ENCODE measurements at regions of chr4 and their contacts with region 1.

Region 1: GRCh38 chr4:71287305-71287704 is 51.5 kb upstream of the SLC4A4 start:
- DNase-seq: peak; percentile 89
- ATAC-seq: peak; percentile 81
- H3K4me3 ChIP-seq: no peak overlapping the region
- H3K27ac ChIP-seq: peak overlapping the region; percentile 31
- H3K4me1 ChIP-seq: peaks cover 26% of the 10 kb centered on the region
- H3K27me3 ChIP-seq: no peaks in the 10 kb centered on the region
- CTCF ChIP-seq: no peak

Region 2: GRCh38 chr4:71377561-71377960 is 90.3 kb after region 1 on chr4:
- CTCF ChIA-PET with region 1: no interaction called
- POLR2A ChIA-PET with region 1: no interaction called
- intact Hi-C with region 1: loop called (anchors 1 kb)
- DNase-seq: peak; percentile 96
- ATAC-seq: peak; percentile 98
- H3K4me3 ChIP-seq: no peak overlapping the region
- H3K27ac ChIP-seq: peak overlapping the region; percentile 39
- H3K4me1 ChIP-seq: peaks cover 21% of the 10 kb centered on the region
- H3K27me3 ChIP-seq: no peaks in the 10 kb centered on the region
- CTCF ChIP-seq: no peak

Region 3: GRCh38 chr4:71426381-71427042 is 139.2 kb after region 1 on chr4:
- CTCF ChIA-PET with region 1: no interaction called
- POLR2A ChIA-PET with region 1: no interaction called
- intact Hi-C with region 1: loop called (anchors 2 kb)
- DNase-seq: peak; percentile 40
- ATAC-seq: peak; percentile 89
- H3K4me3 ChIP-seq: no peak overlapping the region
- H3K27ac ChIP-seq: no peak overlapping the region
- H3K4me1 ChIP-seq: 0 out of 2 replicates have a peak, but pooled peaks cover 6% of the 10 kb centered on the region
- H3K27me3 ChIP-seq: no peaks in the 10 kb centered on the region
- CTCF ChIP-seq: no peak

Region 4: DNA sequence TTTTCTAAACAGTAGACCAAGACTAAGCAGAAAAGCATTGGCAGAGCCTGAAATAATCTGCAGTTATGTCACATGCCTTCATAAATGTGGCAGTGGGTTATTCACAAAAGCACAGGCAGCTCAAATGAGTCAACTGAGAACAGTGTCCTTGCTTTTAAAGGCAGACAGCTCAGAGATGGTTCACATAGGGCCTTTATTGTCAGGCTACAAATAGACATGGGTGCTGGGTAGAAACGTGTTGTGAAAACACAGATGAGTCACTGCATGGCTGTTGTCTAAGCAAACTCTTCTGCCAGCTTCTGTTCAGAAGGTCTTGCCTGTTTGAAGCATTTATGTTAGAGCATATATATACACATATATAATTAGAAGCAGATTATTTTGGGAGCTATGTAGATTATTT is 169.5 kb after region 1 on chr4:
- CTCF ChIA-PET with region 1: no interaction called
- POLR2A ChIA-PET with region 1: no interaction called
- intact Hi-C with region 1: loop called (anchors 1 kb)
- DNase-seq: peak; percentile 92
- ATAC-seq: peak; percentile 100
- H3K4me3 ChIP-seq: no peak overlapping the region
- H3K27ac ChIP-seq: peak overlapping the region; percentile 53
- H3K4me1 ChIP-seq: peaks cover 14% of the 10 kb centered on the region
- H3K27me3 ChIP-seq: no peaks in the 10 kb centered on the region
- CTCF ChIP-seq: no peak

Region 5: DNA sequence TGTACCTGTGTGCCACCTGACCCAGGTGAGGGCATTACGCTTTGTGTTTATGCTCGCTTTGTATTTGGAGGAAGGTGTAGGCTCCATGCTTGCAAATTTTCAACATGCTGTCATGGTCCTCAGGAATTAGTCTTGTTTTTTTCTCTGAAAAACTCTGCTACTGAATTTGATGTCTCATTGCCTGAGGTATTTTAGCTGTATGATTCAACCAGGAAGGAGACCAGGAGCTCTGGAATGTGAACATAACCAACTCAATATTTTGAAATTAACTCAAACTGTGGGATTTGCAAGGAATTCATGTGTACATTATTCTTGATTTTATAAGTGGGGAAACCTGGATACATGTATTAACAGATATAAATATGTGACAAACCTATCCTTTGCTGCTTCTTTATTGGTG is 185.6 kb after region 1 on chr4:
- CTCF ChIA-PET with region 1: no interaction called
- POLR2A ChIA-PET with region 1: no interaction called
- intact Hi-C with region 1: no loop called
- DNase-seq: peak; percentile 71
- ATAC-seq: peak; percentile 82
- H3K4me3 ChIP-seq: no peak overlapping the region
- H3K27ac ChIP-seq: peak overlapping the region; percentile 8; the same call in 1 of the 2 replicates
- H3K4me1 ChIP-seq: peaks cover 14% of the 10 kb centered on the region
- H3K27me3 ChIP-seq: no peaks in the 10 kb centered on the region
- CTCF ChIP-seq: no peak

Region 6: GRCh38 chr4:71498002-71498401 is 210.7 kb after region 1 on chr4:
- CTCF ChIA-PET with region 1: no interaction called
- POLR2A ChIA-PET with region 1: no interaction called
- intact Hi-C with region 1: loop called (anchors 1 kb)
- DNase-seq: peak; percentile 78
- ATAC-seq: peak; percentile 95
- H3K4me3 ChIP-seq: no peak overlapping the region
- H3K27ac ChIP-seq: peak overlapping the region; percentile 11
- H3K4me1 ChIP-seq: peaks cover 17% of the 10 kb centered on the region
- H3K27me3 ChIP-seq: no peaks in the 10 kb centered on the region
- CTCF ChIP-seq: no peak

Measured in PC-3 (cell line).